Cardiac septum (tissue), 1 donor: ENCODE measurements at regions of chr17 and their contacts with region 1.

Region 1: GRCh38 chr17:81309906-81310360 is 14.8 kb upstream of the SLC38A10 start:
- DNase-seq: no peak

Region 2: GRCh38 chr17:81230043-81230820 is 79.7 kb before region 1 on chr17:
- intact Hi-C with region 1: no loop called
- DNase-seq: no peak

Region 3: DNA sequence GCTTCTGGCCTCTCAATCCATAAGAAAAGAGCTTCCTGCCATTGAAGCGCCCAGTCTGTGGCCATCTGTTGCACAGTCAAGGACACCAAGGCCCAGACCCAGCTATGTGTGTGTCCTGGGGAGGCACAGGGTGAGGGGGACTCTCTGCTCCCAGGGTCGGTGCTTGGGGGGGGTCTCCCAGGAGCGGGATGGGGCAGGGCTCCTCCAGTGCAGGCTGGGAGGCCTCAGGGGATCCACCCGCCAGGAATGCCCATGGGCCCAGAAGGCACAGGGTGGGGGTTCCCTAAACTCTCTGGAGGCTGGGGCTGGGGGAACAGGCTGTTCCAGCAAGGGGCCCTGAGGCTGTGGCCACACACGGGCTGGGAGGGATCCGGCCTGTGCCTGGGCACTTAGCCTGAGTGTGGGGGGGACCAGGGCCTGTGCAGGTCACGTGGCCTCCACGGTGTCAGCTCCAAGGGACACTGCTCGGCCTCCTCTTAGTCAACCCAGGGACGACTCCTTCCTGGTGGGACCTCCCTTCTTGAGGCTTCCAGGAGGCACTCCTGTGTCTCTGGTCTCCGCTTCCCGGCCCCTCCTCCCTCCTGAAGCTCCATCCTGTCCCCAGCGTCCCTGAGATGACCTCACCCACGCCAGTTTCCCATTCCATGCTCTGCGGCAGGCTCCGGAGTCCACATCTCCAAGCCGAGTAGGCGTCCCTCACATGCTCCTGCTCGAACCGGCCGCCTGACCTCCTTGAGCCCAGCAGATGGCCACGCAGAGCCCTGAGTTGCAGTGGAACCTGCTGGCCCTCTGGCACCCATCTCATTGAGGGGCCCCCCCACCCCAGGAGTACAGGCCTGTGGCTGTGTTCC is 62.2 kb after region 1 on chr17:
- intact Hi-C with region 1: loop called (anchors 5 kb)
- DNase-seq: no peak